Calu3 (cell line): ENCODE measurements at regions of chr18 and their contacts with region 1.

Region 1: GRCh38 chr18:39523281-39523680 is 1957.7 kb upstream of the CELF4 start:
- DNase-seq: peak; percentile 50
- H3K4me3 Mint-ChIP-seq: no peak overlapping the region
- H3K27ac Mint-ChIP-seq: peak overlapping the region; percentile 62
- H3K4me1 Mint-ChIP-seq: peaks cover 53% of the 10 kb centered on the region
- H3K27me3 Mint-ChIP-seq: no peaks in the 10 kb centered on the region
- CTCF ChIP-seq: no peak

Region 2: GRCh38 chr18:39455285-39455684 is 68.0 kb before region 1 on chr18:
- CTCF ChIA-PET with region 1: no interaction called
- intact Hi-C with region 1: loop called (anchors 5 kb)
- DNase-seq: peak; percentile 68
- H3K4me3 Mint-ChIP-seq: no peak overlapping the region
- H3K27ac Mint-ChIP-seq: peak overlapping the region; percentile 91
- H3K4me1 Mint-ChIP-seq: peaks cover 55% of the 10 kb centered on the region
- H3K27me3 Mint-ChIP-seq: no peaks in the 10 kb centered on the region
- CTCF ChIP-seq: no peak

Region 3: GRCh38 chr18:39635966-39636365 is 112.7 kb after region 1 on chr18:
- CTCF ChIA-PET with region 1: no interaction called
- intact Hi-C with region 1: no loop called
- DNase-seq: no peak
- H3K4me3 Mint-ChIP-seq: no peak overlapping the region
- H3K27ac Mint-ChIP-seq: no peak overlapping the region
- H3K4me1 Mint-ChIP-seq: peaks cover 42% of the 10 kb centered on the region
- H3K27me3 Mint-ChIP-seq: no peaks in the 10 kb centered on the region
- CTCF ChIP-seq: no peak